ENCODE measurements at regions of chr1 and their contacts with region 1.

Region 1: DNA sequence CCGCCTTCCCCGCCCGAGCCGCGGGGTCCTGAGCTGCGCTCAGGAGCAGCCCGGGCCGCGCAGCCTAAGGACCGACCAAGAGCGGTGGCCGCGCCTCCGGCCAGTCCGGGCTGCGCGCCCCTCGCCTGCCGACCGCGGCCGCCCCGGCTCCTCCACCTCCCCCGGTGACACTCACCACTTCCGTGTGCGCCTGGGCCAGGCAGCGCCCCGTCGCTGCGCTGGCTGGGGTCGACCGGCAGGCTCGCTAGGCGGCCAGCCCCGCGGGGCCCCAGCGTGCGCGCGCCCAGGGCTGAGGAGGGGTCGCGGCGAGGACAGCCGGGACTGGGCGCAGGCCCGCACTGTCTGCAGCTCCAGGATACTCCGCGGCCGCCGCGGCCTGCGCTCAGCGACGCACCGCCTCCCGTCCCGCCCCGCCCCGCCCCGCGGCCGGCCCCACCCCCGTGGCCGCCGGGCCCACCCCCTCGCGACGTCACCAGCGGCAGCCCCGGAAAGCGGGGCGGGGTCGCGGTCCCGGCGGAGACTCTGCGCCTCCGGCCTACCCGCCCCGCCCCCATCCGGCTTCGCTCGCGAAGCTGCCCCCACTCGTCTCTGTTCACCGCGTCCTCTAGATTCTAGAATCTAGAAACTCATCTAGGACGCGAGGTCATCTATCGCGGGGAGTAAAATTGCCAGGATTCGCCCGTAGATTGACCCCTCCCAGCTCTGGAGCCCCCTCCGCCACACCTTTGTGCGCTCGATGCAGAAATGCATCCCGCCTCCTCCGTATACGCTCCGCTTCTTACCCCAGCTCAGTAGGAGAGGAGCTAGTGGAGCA is at the start of gene JAK1:
- DNase-seq: peak; percentile 73
- H3K4me3 Mint-ChIP-seq: peak within 1 kb of the TSS; percentile 82
- H3K27ac Mint-ChIP-seq: peak within 1 kb of the TSS; percentile 86
- H3K4me1 Mint-ChIP-seq: peaks cover 29% of the 10 kb centered on the region
- H3K27me3 Mint-ChIP-seq: no peaks in the 10 kb centered on the region
- CTCF ChIP-seq: no peak
- total RNA-seq, gene JAK1: 73.1 and 80.0 TPM in 2 replicates

Region 2: GRCh38 chr1:64686828-64687724 is 279.3 kb before region 1 on chr1:
- CTCF ChIA-PET with region 1: no interaction called
- POLR2A ChIA-PET with region 1: no interaction called
- intact Hi-C with region 1: loop called (anchors 2 kb)
- DNase-seq: peak; percentile 71
- H3K4me3 Mint-ChIP-seq: no peak overlapping the region
- H3K27ac Mint-ChIP-seq: no peak overlapping the region
- H3K4me1 Mint-ChIP-seq: peaks cover 19% of the 10 kb centered on the region
- H3K27me3 Mint-ChIP-seq: no peaks in the 10 kb centered on the region
- CTCF ChIP-seq: peak; percentile 57

Region 3: DNA sequence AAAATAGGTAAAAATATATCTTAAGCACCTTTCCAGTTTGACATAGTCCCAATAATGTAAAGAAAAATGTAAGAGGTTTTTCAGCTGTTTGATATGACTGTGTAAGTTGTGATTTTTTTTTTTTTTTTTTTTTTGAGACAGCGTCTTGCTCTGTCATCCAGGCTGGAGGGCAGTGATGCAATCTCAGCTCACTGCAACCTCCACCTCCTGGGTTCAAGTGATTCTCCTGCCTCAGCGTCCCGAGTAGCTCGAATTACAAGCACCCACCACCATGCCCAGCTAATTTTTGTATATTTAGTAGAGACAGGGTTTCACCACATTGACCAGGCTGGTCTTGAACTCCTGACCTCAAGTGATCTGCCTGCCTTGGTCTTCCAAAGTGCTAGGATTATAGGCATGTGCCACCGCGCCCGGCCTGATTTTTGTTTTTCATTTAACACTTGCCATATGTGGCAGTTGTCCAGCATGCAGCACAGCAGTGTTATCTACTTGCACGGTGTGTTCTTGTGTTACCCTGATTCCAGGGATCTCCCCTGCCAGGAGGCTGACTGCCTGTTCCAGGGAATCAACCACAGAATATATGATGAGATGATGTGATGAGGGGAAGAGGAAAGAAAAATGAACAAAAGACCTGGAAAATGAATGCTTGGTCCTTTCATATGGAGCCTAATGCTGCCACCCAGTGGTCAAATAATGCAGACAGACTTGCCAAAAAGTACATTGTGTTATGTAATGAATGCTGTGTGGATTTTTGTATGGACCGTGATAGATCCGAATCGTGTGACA is 142.5 kb before region 1 on chr1:
- CTCF ChIA-PET with region 1: interaction called, 3 read pairs
- POLR2A ChIA-PET with region 1: no interaction called
- intact Hi-C with region 1: loop called (anchors 2 kb)
- DNase-seq: peak; percentile 88
- H3K4me3 Mint-ChIP-seq: no peak overlapping the region
- H3K27ac Mint-ChIP-seq: peak overlapping the region; percentile 66
- H3K4me1 Mint-ChIP-seq: peaks cover 18% of the 10 kb centered on the region
- H3K27me3 Mint-ChIP-seq: no peaks in the 10 kb centered on the region
- CTCF ChIP-seq: peak; percentile 64

Region 4: DNA sequence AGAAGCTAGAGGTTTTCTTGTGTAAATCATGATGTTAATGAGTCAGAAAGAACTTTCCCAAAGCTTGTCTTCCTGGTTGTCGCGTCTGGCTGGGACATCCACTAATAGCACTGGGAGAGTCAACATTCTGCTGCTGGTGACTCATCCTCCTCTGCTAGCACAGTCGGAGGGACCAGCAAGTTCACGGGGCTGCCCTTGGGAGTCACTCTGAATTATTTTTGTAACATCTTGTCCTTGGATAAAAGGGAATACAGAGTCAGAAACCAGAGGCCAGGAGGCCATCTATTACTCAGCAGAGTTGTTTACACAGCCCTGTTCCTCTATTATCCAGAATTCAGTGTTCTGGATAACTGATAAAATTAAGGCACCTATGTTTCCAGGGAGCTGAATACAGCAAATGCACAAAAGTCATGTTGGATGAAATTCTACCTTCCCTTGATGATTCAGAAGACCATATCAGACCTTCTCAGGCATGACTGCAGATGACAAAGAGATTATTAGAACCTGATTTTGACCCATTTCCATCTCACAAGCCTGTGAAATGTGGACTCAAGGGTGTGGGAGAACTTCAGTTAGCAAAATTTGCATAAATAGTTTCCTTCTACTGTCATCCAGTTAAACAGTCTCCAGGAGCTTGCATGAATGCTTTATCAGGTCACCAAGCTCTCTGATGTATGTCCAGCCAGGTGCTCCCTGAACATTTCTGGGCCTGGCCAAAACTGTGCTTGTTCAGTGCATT is 68.1 kb before region 1 on chr1:
- CTCF ChIA-PET with region 1: interaction called, 4 read pairs
- POLR2A ChIA-PET with region 1: interaction called, 31 read pairs
- intact Hi-C with region 1: loop called (anchors 1 kb)
- DNase-seq: peak; percentile 93
- H3K4me3 Mint-ChIP-seq: peak overlapping the region; percentile 32
- H3K27ac Mint-ChIP-seq: no peak overlapping the region
- H3K4me1 Mint-ChIP-seq: peaks cover 34% of the 10 kb centered on the region
- H3K27me3 Mint-ChIP-seq: no peaks in the 10 kb centered on the region
- CTCF ChIP-seq: no peak

Region 5: DNA sequence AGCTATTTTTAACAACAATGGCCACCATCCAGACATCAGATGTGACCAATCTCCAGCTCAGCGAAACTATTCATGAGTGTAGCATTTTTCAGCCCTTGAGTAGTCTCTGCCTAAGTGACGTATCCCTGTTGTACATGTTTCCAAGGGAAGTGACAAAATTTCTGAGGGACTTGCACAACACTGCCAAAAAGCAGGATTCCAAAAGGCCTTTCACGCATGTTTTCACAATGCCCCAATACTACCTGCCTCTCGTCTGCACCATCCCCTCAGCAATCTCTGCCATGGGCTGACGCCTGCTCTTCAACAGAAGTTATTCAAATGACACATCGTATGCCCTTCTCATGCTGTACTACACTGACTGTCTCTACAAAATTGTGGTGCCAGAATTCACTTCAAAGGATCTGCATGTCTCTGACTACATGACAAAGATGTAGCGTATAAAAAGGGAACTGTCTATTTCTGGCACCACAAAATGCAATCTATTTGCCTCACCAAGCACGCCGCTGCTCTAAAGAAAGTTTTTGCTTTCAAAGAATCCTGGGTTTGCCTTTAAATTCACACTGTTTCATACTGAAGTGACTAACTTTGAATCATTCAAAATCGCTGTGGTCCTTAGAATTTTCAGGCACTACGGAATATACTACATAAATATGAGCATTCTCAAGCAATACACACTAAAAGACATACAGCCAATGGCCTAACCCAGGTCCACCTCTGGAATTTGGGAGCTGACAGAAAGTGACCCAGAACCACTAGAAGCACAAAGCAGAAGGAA is 32.9 kb before region 1 on chr1:
- CTCF ChIA-PET with region 1: no interaction called
- POLR2A ChIA-PET with region 1: interaction called, 19 read pairs
- intact Hi-C with region 1: no loop called
- DNase-seq: peak; percentile 75
- H3K4me3 Mint-ChIP-seq: peak overlapping the region; percentile 11
- H3K27ac Mint-ChIP-seq: peak overlapping the region; percentile 91
- H3K4me1 Mint-ChIP-seq: peaks cover 28% of the 10 kb centered on the region
- H3K27me3 Mint-ChIP-seq: no peaks in the 10 kb centered on the region
- CTCF ChIP-seq: no peak

Region 6: DNA sequence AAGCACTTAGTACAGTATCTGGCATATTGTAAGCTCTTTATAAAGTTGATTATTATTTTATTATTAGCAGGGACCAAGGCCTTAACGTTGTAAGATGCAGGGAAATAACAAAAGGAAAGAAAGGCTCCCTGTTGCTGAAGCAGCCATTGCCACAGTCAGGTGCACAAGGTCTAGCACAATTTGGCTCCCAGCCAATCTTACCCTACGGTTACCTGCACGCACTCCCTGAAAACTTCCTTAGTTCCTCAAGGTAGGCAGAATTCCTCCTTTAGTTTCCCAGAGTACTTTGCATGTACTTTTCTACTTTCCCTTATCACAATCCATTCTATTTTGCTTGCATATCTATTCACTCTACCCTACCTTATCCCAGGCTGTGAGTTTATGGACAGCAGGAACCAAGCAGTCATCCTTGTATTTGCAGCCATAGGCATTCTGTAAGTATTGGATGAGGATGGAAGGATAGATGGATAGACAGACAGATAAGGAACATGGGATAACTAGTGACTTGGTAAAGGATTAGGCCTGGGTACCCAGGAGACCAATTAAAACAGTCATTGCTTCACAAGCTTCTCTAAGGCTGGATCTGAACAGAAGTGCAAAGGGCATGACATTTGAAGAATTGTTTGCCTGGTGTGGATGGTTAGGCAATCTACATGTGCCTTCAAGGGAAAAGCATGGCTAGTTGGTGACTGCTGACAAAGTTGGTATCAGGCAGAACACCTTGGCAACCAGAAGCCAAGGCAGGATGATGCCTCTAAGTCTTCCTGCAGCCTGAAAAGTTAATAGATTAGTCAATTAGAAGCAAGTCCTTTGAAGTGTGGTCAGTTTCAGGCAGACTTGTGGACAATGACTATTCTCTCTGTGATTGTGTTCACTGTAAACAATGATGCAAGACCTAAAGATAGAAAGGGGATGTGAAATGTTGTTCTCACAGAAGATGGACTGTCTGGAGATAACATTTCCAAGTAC is 20.8 kb after region 1 on chr1:
- CTCF ChIA-PET with region 1: interaction called, 4 read pairs
- POLR2A ChIA-PET with region 1: interaction called, 19 read pairs
- intact Hi-C with region 1: no loop called
- DNase-seq: peak; percentile 16
- H3K4me3 Mint-ChIP-seq: no peak overlapping the region
- H3K27ac Mint-ChIP-seq: no peak overlapping the region
- H3K4me1 Mint-ChIP-seq: peaks cover 19% of the 10 kb centered on the region
- H3K27me3 Mint-ChIP-seq: no peaks in the 10 kb centered on the region
- CTCF ChIP-seq: no peak

Measured in MCF 10A (cell line).